ENCODE measurements at regions of chr21 and their contacts with region 1.

Region 1: GRCh38 chr21:29849735-29850176 is 90.0 kb downstream of the GRIK1 start:
- DNase-seq: peak; percentile 40 to 79 (median 57)
- H3K4me3 ChIP-seq: no peak overlapping the region
- H3K27ac ChIP-seq: no peak overlapping the region
- H3K4me1 ChIP-seq: no peaks in the 10 kb centered on the region
- H3K27me3 ChIP-seq: no peaks in the 10 kb centered on the region
- CTCF ChIP-seq: peak; percentile 52 to 74 (median 68)
- POLR2A ChIP-seq: no peak

Region 2: GRCh38 chr21:29477941-29478340 is 371.8 kb before region 1 on chr21:
- intact Hi-C with region 1: loop called (anchors 5 kb)
- DNase-seq: no peak
- H3K4me3 ChIP-seq: no peak overlapping the region
- H3K27ac ChIP-seq: no peak overlapping the region
- H3K4me1 ChIP-seq: no peaks in the 10 kb centered on the region
- H3K27me3 ChIP-seq: no peaks in the 10 kb centered on the region
- CTCF ChIP-seq: no peak
- POLR2A ChIP-seq: no peak

Region 3: GRCh38 chr21:29961291-29962027 is 111.7 kb after region 1 on chr21:
- intact Hi-C with region 1: no loop called
- DNase-seq: no peak
- H3K4me3 ChIP-seq: no peak overlapping the region
- H3K27ac ChIP-seq: no peak overlapping the region
- H3K4me1 ChIP-seq: no peaks in the 10 kb centered on the region
- H3K27me3 ChIP-seq: no peaks in the 10 kb centered on the region
- CTCF ChIP-seq: no peak
- POLR2A ChIP-seq: no peak

Region 4: DNA sequence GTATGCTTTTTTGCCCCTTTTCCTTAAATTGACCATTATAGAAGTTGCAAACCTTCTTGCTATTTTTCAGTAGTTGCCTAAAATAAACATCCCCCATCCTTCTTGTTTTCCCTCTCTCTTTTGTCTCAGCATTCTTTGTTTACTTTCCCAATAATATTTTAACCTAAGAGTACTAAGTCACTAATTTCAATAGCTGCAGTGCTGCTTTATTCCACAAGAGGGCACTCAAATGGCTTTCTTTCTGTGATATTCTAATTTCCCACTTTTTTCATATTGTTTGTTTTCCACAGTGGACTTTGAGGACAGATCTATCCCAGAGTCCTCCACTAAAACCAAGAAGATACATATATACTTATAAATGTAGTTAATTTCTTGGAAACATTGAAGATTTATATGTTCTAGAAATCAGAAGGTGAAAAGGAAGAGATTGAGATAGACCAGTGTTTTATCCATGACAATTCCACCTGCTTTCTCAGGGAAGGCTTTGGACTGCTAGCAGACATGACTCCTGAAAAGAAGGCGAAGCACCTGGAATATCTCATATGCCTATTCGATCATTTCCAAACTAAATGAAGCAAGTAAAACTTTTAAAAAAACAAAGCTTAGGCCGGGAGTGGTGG is 194.8 kb after region 1 on chr21:
- intact Hi-C with region 1: no loop called
- DNase-seq: peak in 2 of 7 donors; percentile 2 to 26
- H3K4me3 ChIP-seq: no peak overlapping the region
- H3K27ac ChIP-seq: no peak overlapping the region
- H3K4me1 ChIP-seq: no peaks in the 10 kb centered on the region
- H3K27me3 ChIP-seq: no peaks in the 10 kb centered on the region
- CTCF ChIP-seq: peak; percentile 45 to 83 (median 65)
- POLR2A ChIP-seq: no peak

Measured in adrenal gland (tissue), 19 donors.